Pancreas (tissue), 10 donors: ENCODE measurements at regions of chr1 and their contacts with region 1.

Region 1: DNA sequence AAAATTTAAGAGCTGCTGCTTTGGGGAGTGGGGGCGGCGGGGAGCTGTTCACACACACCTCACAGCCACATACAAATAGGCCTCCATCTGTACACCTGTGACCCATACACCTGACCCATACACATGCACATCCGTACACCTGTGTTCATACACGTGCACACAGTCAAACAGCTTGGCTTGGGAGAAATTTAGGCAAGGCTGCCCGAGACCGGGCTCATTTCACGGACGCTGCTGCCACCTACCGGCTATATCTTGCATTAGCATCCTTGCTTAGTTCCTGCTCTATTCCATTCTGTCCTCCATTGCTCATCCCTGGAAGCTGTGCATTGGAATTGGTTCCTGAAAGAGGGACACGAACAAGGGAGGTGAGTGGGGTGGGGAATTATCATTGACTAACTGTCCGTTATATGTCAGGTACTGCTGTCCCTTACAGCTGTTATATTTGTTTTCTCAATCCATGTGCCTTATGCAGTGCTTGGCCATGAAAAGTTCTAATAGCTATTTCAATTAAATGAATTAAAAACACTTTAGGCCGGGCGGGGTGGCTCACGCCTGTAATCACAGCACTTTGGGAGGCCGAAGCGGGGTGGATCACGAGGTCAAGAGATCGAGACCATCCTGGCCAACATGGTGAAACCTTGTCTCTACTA is 37.1 kb upstream of the EPB41 start:
- DNase-seq: peak; percentile 67 to 88 (median 78)
- ATAC-seq: peak; percentile 82 to 90 (median 88)
- H3K4me3 ChIP-seq: no peak overlapping the region
- H3K27ac ChIP-seq: no peak overlapping the region
- H3K4me1 ChIP-seq: no peaks in the 10 kb centered on the region
- H3K27me3 ChIP-seq: no peaks in the 10 kb centered on the region
- CTCF ChIP-seq: peak; percentile 74 to 90 (median 86)

Region 2: DNA sequence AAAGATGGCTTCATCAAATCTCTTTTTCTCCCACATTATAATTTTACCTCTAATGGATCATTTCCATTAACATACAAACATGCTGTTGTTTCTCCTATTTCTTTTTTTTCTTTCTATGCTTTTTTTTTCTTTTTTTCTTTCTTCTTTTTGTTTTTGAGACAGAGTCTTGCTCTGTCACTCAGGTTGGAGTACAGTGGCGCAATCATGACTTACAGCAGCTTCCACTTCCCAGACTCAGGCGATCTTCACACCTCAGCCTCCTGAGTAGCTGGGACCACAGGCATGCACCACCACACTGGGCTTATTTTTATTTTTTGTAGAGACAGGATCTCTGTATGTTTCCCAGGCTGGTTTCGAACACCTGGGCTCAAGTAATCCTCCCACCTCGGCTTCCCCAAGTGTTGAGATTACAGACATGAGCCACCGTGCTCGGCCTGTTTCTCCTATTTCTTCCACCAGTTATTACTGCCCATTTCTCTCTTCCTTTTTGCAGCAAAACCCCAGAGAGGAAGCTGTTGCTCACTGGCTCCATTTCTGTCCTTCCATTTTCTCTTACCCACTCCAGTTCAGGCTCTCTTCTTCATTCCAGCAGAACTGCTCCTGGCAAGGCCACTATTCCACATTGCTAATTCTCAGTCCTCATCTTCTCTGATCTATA is 97.4 kb before region 1 on chr1:
- intact Hi-C with region 1: loop called in 1 of 3 experiments (anchors 5 kb)
- DNase-seq: no peak
- ATAC-seq: no peak
- H3K4me3 ChIP-seq: no peak overlapping the region
- H3K27ac ChIP-seq: no peak overlapping the region
- H3K4me1 ChIP-seq: peaks cover 0 to under 1% (median 0%) of the 10 kb centered on the region in 3 donors
- H3K27me3 ChIP-seq: no peaks in the 10 kb centered on the region
- CTCF ChIP-seq: no peak

Region 3: GRCh38 chr1:28792644-28793121 is 84.6 kb before region 1 on chr1:
- intact Hi-C with region 1: loop called in 1 of 3 experiments (anchors 10 kb)
- DNase-seq: no peak
- ATAC-seq: no peak
- H3K4me3 ChIP-seq: no peak overlapping the region
- H3K27ac ChIP-seq: no peak overlapping the region
- H3K4me1 ChIP-seq: no peaks in the 10 kb centered on the region
- H3K27me3 ChIP-seq: no peaks in the 10 kb centered on the region
- CTCF ChIP-seq: peak in 1 of 4 donors; percentile 10

Region 4: DNA sequence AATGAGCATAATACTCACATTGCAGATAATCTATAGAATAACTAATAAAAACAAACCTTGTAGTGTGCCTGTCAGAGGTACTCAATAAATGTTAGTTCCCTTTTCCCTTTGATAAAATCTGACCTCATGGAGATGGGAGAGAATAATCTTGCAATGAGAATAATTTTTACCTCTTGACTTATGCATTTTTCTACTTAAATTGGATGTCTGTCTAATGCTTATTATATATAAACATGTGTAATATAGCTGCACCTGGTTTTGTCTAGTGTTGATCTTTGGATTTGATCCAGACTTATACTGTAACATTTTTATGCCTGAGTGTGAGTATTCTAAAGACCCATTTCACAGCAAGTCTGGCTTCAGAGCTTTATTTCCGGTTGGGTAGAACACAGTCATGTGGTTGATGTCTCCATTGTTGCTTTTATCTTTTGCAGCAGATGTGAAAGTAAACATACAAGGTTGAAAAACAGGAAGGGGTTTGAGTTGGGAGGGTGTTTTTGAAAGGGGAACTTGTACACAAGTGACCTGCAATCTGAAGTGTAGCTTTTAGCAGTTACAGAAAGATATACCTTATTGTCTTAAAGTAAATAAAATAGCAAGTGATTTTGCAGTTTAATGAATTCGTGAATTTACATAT is 49.5 kb after region 1 on chr1:
- intact Hi-C with region 1: no loop called
- DNase-seq: no peak
- ATAC-seq: peak; percentile 50 to 78 (median 64)
- H3K4me3 ChIP-seq: no peak overlapping the region
- H3K27ac ChIP-seq: peak overlapping the region in 2 of 4 donors; percentile 15 to 30
- H3K4me1 ChIP-seq: peaks cover 8 to 26% (median 10%) of the 10 kb centered on the region in 3 donors
- H3K27me3 ChIP-seq: no peaks in the 10 kb centered on the region
- CTCF ChIP-seq: no peak